Activated T-helper 1 cell treated with anti-CD3 and anti-CD28 coated beads, Interleukin-12 subunit alpha, Interleukin-12 subunit beta, Interleukin-2, Interleukin-4 antibody, amounts not matched to agents 30 ng/mL and 10 ng/mL and 1 ng/mL, durations not matched to agents 14 hours and 24 hours and 36 hours (primary cell): ENCODE measurements at regions of chr12 and their contacts with region 1.

Region 1: GRCh38 chr12:131104463-131105350 is 151.0 kb downstream of the ADGRD1 start:
- DNase-seq: peak; percentile 69
- H3K4me3 Mint-ChIP-seq: no peak overlapping the region
- H3K27ac Mint-ChIP-seq: no peak overlapping the region
- H3K4me1 Mint-ChIP-seq: peaks cover 19% of the 10 kb centered on the region
- H3K27me3 Mint-ChIP-seq: peaks cover 9% of the 10 kb centered on the region

Region 2: DNA sequence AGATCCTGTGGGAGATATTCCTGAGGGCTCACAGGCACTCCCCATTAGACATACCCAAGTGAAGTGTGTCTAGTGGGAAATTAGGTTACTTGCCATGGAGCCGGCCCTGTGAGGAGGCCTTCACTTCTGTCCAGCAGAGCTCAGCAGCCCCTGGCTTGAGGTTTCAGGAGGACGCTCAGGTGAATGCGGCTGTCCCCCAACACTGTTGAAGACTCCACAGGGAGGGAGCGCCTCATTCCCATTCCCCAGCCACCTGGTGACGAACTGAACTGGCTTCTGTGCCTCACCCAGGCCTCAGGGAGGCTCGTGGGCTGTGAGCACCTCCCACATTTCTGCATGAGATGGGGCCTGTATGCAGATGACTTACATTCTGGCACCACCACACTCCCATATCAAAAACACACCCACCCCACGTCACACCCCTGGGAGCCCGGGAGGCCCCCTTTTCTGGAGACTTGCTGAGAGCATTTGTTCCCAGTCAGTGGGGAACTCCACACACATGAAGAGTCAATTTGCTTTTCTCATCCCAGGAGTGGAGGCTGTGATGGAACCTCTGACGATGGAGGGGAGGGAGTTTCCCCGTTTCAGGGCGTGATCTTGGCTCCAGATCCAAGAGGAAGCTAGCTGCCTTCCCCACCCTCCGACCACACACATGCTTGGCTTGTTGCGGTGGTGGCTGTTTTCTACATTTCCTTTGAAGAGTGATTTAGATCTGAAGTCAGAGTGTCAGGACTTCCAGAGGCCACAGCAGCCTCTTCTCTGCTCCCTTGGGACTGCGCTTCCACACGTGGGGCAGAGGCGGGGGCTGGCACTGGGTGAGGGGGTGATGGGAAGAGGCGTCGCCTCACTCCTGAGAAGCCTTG is 30.3 kb before region 1 on chr12:
- intact Hi-C with region 1: no loop called
- DNase-seq: no peak
- H3K4me3 Mint-ChIP-seq: no peak overlapping the region
- H3K27ac Mint-ChIP-seq: no peak overlapping the region
- H3K4me1 Mint-ChIP-seq: no peaks in the 10 kb centered on the region
- H3K27me3 Mint-ChIP-seq: no peaks in the 10 kb centered on the region

Region 3: GRCh38 chr12:131132118-131132892 is 27.6 kb after region 1 on chr12:
- intact Hi-C with region 1: loop called (anchors 1 kb)
- DNase-seq: peak; percentile 29
- H3K4me3 Mint-ChIP-seq: no peak overlapping the region
- H3K27ac Mint-ChIP-seq: no peak overlapping the region
- H3K4me1 Mint-ChIP-seq: no peaks in the 10 kb centered on the region
- H3K27me3 Mint-ChIP-seq: no peaks in the 10 kb centered on the region

Region 4: DNA sequence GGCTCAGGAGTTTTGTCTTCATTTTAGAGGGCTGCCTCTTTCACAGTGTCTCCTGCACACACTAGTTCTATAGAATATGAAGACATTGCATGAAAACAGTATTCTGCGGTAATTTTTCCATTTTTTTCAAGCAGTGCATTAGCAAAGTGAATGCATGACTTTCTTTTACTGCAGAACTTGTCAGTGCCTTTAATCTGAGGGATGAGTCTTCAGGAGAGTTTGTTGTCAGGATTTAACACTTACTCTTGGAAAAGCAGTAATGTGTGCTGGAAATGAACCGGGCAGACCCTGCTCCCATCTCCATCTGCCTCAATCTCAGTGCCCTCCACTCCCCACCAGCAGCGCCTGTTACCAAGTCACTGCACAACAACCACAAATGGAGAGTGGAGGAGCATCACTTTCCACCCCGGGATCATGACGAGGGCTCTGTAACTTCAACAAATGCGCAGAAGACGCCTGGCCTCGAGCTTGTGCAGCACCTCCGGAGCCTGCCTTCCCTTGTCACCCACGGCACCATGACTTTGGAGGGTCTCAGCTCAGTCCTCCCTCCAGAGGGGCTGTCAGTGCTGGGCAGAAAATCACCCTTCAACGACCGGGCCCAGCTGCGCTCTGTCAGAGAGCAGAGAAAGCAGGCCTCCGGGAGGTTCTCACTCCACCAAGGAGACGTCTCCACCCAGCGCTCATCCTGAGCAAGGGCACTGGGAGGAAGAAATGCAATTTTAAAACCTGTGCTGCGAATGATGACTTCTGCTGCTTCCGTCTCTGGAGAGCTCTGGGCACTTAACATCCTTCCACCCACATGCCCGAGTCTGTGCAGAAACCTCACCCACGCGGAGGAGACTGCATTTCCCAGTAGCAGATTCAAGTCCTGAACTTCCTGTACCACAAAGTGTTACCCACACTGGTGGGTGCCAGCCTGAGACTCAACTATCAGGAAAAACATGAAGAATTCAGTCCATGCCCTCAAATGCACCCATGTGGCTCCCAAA is 104.7 kb after region 1 on chr12:
- intact Hi-C with region 1: loop called (anchors 1 kb)
- DNase-seq: no peak
- H3K4me3 Mint-ChIP-seq: no peak overlapping the region
- H3K27ac Mint-ChIP-seq: peak overlapping the region; percentile 68
- H3K4me1 Mint-ChIP-seq: peaks cover 31% of the 10 kb centered on the region
- H3K27me3 Mint-ChIP-seq: no peaks in the 10 kb centered on the region

Region 5: DNA sequence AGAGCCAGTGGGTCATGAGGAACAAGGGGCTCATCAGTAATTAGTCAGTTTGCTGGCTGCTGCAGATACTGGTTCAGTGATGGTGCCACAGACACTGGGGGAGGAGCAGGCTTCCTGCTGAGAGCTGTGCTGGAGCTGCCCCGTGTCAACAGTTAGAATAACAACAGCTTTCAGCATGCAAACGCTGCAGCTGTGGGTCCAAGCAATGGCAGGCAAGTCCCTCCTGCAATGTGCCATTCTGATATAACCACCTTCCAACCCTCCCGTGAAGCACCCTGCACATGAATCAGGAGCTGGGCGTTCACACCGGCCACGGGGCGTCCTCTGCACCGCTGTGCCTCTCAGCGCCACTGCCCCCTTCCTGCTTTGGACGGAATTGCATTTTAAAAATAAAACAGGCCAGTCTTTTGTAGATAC is 347.7 kb after region 1 on chr12:
- intact Hi-C with region 1: loop called (anchors 1 kb)
- DNase-seq: no peak
- H3K4me3 Mint-ChIP-seq: no peak overlapping the region
- H3K27ac Mint-ChIP-seq: no peak overlapping the region
- H3K4me1 Mint-ChIP-seq: no peaks in the 10 kb centered on the region
- H3K27me3 Mint-ChIP-seq: peaks cover 5% of the 10 kb centered on the region

Region 6: GRCh38 chr12:131710464-131711457 is 606.1 kb after region 1 on chr12 and contains the start of gene SFSWAP:
- intact Hi-C with region 1: loop called (anchors 10 kb)
- DNase-seq: peak; percentile 72
- H3K4me3 Mint-ChIP-seq: peak within 1 kb of the TSS; percentile 93
- H3K27ac Mint-ChIP-seq: peak within 1 kb of the TSS; percentile 92
- H3K4me1 Mint-ChIP-seq: peaks cover 26% of the 10 kb centered on the region
- H3K27me3 Mint-ChIP-seq: peaks cover 4% of the 10 kb centered on the region
- total RNA-seq, gene SFSWAP: 65.3 and 69.3 TPM in 2 replicates

Region 7: GRCh38 chr12:131830335-131830913 is 725.7 kb after region 1 on chr12:
- intact Hi-C with region 1: loop called (anchors 2 kb)
- DNase-seq: peak; percentile 18
- H3K4me3 Mint-ChIP-seq: peak overlapping the region; percentile 62
- H3K27ac Mint-ChIP-seq: no peak overlapping the region
- H3K4me1 Mint-ChIP-seq: no peaks in the 10 kb centered on the region
- H3K27me3 Mint-ChIP-seq: peaks cover 38% of the 10 kb centered on the region